Mucosa of descending colon (tissue), 3 donors: ENCODE measurements at regions of chr3 and their contacts with region 1.

Region 1: GRCh38 chr3:46923559-46924350 is 46.2 kb downstream of the PTH1R start:
- DNase-seq: peak in 2 of 3 donors; percentile 47 to 60
- ATAC-seq: peak; percentile 67
- H3K4me3 ChIP-seq: no peak overlapping the region
- H3K4me1 ChIP-seq: peaks cover 22% of the 10 kb centered on the region
- CTCF ChIP-seq: peak; percentile 25

Region 2: DNA sequence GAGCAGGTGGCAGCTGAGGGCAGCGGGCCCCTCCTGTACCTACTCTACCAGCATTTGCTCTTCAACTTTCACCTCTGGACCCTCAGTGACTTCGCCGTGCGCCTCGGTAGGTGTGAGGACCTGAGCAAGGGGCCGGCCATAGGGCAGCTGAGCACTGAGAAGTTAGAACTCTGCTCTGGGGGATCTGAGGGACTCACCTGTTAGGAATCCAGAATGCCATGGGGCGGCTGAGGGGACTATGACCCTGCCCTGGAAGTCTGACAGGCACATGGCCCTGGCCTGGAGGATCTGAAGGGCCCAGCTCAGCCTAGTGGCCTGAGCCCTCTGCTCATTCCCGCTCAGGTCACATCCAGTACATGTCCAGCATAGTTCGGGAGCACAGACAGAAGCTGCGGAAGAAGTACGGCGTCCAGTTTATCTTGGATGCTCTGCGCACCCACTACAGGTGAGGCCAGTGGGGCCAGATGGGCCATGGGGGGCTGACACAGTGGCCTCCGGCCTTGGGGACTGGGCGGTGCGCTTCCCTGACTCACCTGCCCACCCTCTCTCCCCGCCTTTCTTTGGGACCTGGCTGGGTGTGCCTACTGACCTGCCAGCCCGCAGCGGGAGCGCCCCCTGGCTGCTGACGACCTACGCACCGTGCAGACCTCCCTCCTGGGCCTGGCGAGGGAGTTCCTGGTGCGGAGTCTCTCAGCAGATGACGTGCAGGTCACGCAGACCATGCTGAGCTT is 74.5 kb after region 1 on chr3:
- intact Hi-C with region 1: loop called (anchors 5 kb)
- DNase-seq: peak; percentile 82 to 91 (median 89)
- ATAC-seq: peak; percentile 87
- H3K4me3 ChIP-seq: no peak overlapping the region
- H3K4me1 ChIP-seq: no peaks in the 10 kb centered on the region
- CTCF ChIP-seq: peak; percentile 78

Region 3: GRCh38 chr3:47113669-47114365 is 190.1 kb after region 1 on chr3:
- intact Hi-C with region 1: no loop called
- DNase-seq: no peak
- ATAC-seq: no peak
- H3K4me3 ChIP-seq: no peak overlapping the region
- H3K4me1 ChIP-seq: no peaks in the 10 kb centered on the region
- CTCF ChIP-seq: no peak